ENCODE measurements at regions of chr6 and their contacts with region 1.

Region 1: DNA sequence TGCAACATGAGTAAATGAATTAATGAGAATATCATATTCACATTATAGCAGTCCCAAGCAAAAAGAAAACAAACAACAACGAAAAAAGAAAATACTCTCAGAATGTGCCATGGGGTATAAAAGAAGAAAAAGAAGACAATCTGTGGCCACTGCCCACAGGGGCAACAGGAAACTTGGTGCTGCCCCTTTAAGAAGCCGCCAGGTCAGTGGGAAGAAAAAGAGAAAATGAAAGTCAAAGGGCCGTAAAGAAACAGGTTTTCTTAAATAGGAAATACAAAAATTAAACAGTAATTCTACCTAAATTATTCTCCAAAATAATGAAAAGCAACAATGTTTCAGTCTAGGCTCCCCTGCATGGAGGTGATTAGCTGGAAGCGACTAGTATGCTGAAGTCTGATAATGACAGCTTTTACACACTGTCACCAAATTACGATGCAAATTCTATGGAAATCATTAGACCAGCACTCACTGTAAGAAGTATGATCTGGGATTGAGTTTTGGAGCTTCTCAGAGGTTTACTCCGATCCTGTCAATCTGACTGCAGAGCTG is 23.6 kb downstream of the GMDS start:
- DNase-seq: peak; percentile 20
- H3K4me3 Mint-ChIP-seq: peak overlapping the region; percentile 66
- H3K27ac Mint-ChIP-seq: peak overlapping the region; percentile 81
- H3K4me1 Mint-ChIP-seq: peaks cover 31% of the 10 kb centered on the region
- H3K27me3 Mint-ChIP-seq: no peaks in the 10 kb centered on the region
- CTCF ChIP-seq: no peak

Region 2: DNA sequence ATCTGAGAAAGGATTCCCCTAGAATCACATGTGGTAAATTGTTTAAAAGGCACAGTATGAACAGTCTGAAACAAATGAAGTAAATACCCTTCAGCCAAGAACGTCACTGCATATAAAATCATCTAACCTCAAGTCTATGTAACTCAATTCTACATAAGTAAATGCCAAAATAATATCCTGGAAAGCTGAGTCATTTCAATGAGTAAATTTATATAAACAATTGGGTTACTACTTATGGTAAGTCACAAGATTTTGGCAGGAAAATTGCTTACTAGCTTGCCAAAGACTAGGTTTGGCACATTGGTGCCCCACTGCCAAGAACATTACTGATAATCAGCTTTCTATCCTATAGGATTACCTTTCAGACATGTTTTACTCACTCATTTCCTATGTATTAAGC is 15.2 kb after region 1 on chr6:
- CTCF ChIA-PET with region 1: no interaction called
- POLR2A ChIA-PET with region 1: interaction called, 18 read pairs
- intact Hi-C with region 1: no loop called
- DNase-seq: peak; percentile 96
- H3K4me3 Mint-ChIP-seq: no peak overlapping the region
- H3K27ac Mint-ChIP-seq: peak overlapping the region; percentile 81
- H3K4me1 Mint-ChIP-seq: peaks cover 30% of the 10 kb centered on the region
- H3K27me3 Mint-ChIP-seq: no peaks in the 10 kb centered on the region
- CTCF ChIP-seq: no peak

Region 3: DNA sequence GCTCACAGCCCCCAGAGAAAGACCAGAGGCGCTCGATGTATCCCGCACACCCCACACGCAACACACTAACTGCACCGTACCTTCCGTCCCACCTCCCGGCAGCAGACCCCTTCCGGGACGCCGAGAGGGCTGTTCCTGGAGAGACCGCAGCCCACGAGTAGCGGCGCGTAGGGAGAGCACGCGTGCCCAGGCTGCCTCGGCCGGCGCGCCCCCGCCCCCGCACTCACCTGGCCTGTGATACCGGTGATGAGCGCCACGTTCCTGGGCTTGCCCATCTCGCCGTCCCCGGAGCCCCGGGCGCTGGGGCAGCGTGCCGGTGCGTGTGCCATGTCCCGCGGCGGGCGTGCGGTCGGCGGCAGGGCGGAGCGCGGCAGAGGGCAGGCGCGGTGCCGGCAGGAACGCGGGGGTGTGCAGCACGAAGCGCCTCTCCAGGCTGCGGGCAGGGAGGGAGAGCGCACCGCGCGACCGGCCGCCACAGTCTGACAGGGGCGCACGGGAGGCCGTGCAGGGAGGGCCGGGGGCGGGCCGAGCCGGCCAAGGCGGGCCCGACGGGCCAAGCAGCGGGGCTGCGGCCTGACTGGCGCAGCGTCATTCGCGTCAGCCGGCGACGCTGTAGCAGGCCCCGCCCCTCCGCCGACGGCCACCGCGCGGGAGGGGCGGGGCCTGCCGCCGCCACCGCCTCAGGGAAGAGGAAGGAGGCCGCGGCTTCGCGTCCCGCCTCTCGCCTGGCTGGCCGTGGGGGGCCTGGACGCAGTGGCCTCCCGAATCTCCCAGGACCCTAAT is 23.5 kb after region 1 on chr6 and contains the start of gene GMDS:
- CTCF ChIA-PET with region 1: no interaction called
- POLR2A ChIA-PET with region 1: interaction called, 13 read pairs
- intact Hi-C with region 1: no loop called
- DNase-seq: peak; percentile 85
- H3K4me3 Mint-ChIP-seq: peak within 1 kb of the TSS; percentile 87
- H3K27ac Mint-ChIP-seq: peak within 1 kb of the TSS; percentile 90
- H3K4me1 Mint-ChIP-seq: peaks cover 16% of the 10 kb centered on the region
- H3K27me3 Mint-ChIP-seq: no peaks in the 10 kb centered on the region
- CTCF ChIP-seq: no peak
- total RNA-seq, gene GMDS: 19.7 and 24.9 TPM in 2 replicates

Region 4: GRCh38 chr6:2274981-2275891 is 53.4 kb after region 1 on chr6:
- CTCF ChIA-PET with region 1: no interaction called
- POLR2A ChIA-PET with region 1: no interaction called
- intact Hi-C with region 1: no loop called
- DNase-seq: no peak
- H3K4me3 Mint-ChIP-seq: no peak overlapping the region
- H3K27ac Mint-ChIP-seq: no peak overlapping the region
- H3K4me1 Mint-ChIP-seq: no peaks in the 10 kb centered on the region
- H3K27me3 Mint-ChIP-seq: no peaks in the 10 kb centered on the region
- CTCF ChIP-seq: no peak

Region 5: GRCh38 chr6:2765166-2765895 is 543.5 kb after region 1 on chr6 and contains the start of gene WRNIP1:
- CTCF ChIA-PET with region 1: no interaction called
- POLR2A ChIA-PET with region 1: no interaction called
- intact Hi-C with region 1: no loop called
- DNase-seq: peak; percentile 98
- H3K4me3 Mint-ChIP-seq: peak within 1 kb of the TSS; percentile 71
- H3K27ac Mint-ChIP-seq: peak within 1 kb of the TSS; percentile 98
- H3K4me1 Mint-ChIP-seq: peaks cover 24% of the 10 kb centered on the region
- H3K27me3 Mint-ChIP-seq: no peaks in the 10 kb centered on the region
- CTCF ChIP-seq: peak; percentile 43
- total RNA-seq, gene WRNIP1: 33.4 and 44.8 TPM in 2 replicates

Measured in MCF 10A (cell line).